ENCODE measurements at regions of chr14 and their contacts with region 1.

Region 1: DNA sequence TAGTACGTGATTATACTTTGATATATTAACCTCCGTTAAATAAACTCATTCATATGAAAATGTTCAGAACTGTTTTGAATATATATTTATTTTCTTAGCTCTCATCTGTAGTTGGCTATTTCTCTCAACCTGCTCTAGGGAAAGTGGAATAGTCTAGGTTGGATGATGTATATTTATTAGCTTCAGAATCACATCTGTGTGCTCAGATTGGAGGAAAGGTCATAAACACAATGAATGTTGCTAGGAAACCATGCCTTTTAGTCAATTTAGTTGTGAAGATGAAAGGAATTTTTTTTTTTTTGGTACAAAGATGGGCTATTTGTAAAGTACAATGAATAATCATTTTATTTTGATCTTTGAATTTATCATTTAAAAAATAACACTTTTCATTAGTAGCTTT is 439.1 kb downstream of the FOXG1 start:
- DNase-seq: no peak
- H3K4me3 ChIP-seq: no peak overlapping the region
- H3K27ac ChIP-seq: no peak overlapping the region
- H3K4me1 ChIP-seq: no peaks in the 10 kb centered on the region
- H3K27me3 ChIP-seq: no peaks in the 10 kb centered on the region
- CTCF ChIP-seq: no peak

Region 2: GRCh38 chr14:29242755-29243754 is 37.4 kb after region 1 on chr14:
- CTCF ChIA-PET with region 1: no interaction called
- POLR2A ChIA-PET with region 1: no interaction called
- intact Hi-C with region 1: no loop called
- DNase-seq: no peak
- H3K4me3 ChIP-seq: no peak overlapping the region
- H3K27ac ChIP-seq: no peak overlapping the region
- H3K4me1 ChIP-seq: no peaks in the 10 kb centered on the region
- H3K27me3 ChIP-seq: no peaks in the 10 kb centered on the region
- CTCF ChIP-seq: no peak

Region 3: GRCh38 chr14:30573226-30573814 is 1367.7 kb after region 1 on chr14:
- CTCF ChIA-PET with region 1: no interaction called
- POLR2A ChIA-PET with region 1: interaction called, 16 read pairs
- intact Hi-C with region 1: no loop called
- DNase-seq: no peak
- H3K4me3 ChIP-seq: no peak overlapping the region
- H3K27ac ChIP-seq: no peak overlapping the region
- H3K4me1 ChIP-seq: no peaks in the 10 kb centered on the region
- H3K27me3 ChIP-seq: no peaks in the 10 kb centered on the region
- CTCF ChIP-seq: no peak